Cardiac septum (tissue), 1 donor: ENCODE measurements at regions of chr15 and their contacts with region 1.

Region 1: DNA sequence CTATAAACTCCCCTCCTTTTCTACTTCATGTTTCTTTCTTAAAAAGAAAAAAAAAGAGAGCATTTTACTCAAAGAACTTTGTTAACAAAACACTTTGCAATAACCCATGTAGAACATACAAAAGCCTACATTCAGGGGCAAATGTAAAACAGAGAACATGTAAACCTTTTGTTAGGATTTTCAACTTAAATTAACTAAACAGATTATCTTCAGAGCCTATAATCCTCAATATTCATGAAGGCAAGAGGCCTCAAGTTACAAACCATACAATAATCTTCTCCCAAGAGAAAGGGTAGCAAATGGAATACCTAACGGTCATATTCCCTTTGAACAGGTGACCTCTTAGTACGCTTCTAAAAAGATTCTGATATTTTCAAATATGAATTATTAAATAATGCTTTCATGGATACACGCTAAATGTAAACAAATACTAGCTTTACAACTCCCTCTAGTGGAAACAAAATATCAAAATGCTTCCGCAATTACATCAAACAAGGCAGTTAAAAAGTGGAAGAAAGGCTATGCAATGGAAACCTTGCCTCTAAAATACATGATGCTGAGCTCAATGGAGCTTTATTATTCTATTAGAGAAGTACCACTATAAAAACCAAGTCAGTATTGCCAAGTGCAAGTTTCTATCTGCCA is 9.9 kb downstream of the CEP152 start:
- DNase-seq: no peak

Region 2: GRCh38 chr15:48358229-48358641 is 442.7 kb before region 1 on chr15:
- intact Hi-C with region 1: loop called (anchors 5 kb)
- DNase-seq: no peak